ENCODE measurements at regions of chr5 and their contacts with region 1.

Region 1: GRCh38 chr5:36079200-36079761 is 12.6 kb upstream of the UGT3A2 start:
- DNase-seq: peak; percentile 47 to 62
- H3K4me3 ChIP-seq: peak overlapping the region in 1 of 4 experiments; percentile 31; a peak in 2 of 8 replicates
- H3K27ac ChIP-seq: peak overlapping the region; percentile 33; the same call in 1 of the 2 replicates
- H3K4me1 ChIP-seq: peaks cover 0 to 12% (median 2%) of the 10 kb centered on the region in 4 experiments; a peak in 5 of 7 replicates
- H3K27me3 ChIP-seq: no peaks in the 10 kb centered on the region
- CTCF ChIP-seq: peak in 2 of 3 experiments; percentile 65 to 79; a peak in 3 of 4 replicates
- EP300 ChIP-seq: no peak
- POLR2A ChIP-seq: peak in 1 of 2 experiments; percentile 61; a peak in 2 of 3 replicates
- RAD21 ChIP-seq: peak; percentile 79 to 82

Region 2: DNA sequence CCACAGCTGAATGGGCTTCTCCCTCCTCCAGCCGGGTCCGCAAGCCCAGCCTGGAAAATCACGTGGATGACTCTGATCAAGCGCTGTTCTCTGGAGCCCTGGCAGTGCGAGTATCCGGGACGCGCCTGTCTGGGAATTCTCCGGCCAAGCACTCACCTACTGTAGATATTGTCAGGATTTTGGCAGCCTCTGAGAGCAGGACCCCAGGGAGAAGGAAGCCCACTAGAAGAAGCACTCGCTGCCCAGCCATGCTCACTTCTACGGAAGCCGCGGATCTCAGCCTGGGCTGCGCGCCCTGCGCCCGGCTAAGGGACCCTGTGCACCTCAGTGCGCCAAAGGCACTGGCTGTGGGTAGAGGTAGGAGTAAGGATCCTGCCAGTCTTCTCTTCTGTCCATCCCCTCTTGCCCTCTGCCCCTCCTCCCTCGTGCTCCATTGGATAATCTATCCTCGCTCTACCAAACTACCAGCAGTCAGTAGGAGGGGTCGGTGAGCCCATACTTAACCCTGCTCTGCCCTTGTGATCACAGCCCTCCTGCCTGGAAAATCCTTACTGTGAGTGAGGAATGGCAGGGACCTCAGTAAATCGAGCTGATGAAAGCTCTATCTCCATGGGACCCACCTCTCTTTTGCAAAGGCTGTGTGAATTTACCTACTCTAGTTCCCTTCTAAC is 12.6 kb before region 1 on chr5 and contains the start of gene UGT3A2:
- CTCF ChIA-PET with region 1: interaction called, 15 read pairs
- POLR2A ChIA-PET with region 1: interaction called, 13 read pairs
- DNase-seq: peak; percentile 86
- H3K4me3 ChIP-seq: peak within 1 kb of the TSS; percentile 65 to 77 (median 76)
- H3K27ac ChIP-seq: no peak within 1 kb of the TSS
- H3K4me1 ChIP-seq: peaks cover 0 to 6% (median 4%) of the 10 kb centered on the region in 4 experiments; a peak in 4 of 7 replicates
- H3K27me3 ChIP-seq: no peaks in the 10 kb centered on the region; a peak in 1 of 7 replicates
- CTCF ChIP-seq: peak in 2 of 3 experiments; percentile 4 to 36; a peak in 2 of 4 replicates
- EP300 ChIP-seq: no peak
- POLR2A ChIP-seq: peak; percentile 92 to 99
- RAD21 ChIP-seq: no peak; a peak in 1 of 4 replicates
- total RNA-seq, gene UGT3A2: 19.4 and 20.4 TPM in 2 replicates

Region 3: GRCh38 chr5:36089989-36090564 is 10.8 kb after region 1 on chr5:
- CTCF ChIA-PET with region 1: interaction called, 55 read pairs
- POLR2A ChIA-PET with region 1: interaction called, 3 read pairs
- DNase-seq: peak; percentile 33 to 60
- H3K4me3 ChIP-seq: no peak overlapping the region
- H3K27ac ChIP-seq: no peak overlapping the region
- H3K4me1 ChIP-seq: peaks cover 0 to 5% (median 2%) of the 10 kb centered on the region in 4 experiments; a peak in 2 of 7 replicates
- H3K27me3 ChIP-seq: no peaks in the 10 kb centered on the region
- CTCF ChIP-seq: peak; percentile 28 to 75 (median 53)
- EP300 ChIP-seq: peak in 1 of 2 experiments; percentile 10; a peak in 1 of 3 replicates
- POLR2A ChIP-seq: no peak
- RAD21 ChIP-seq: peak; percentile 34 to 45

Region 4: DNA sequence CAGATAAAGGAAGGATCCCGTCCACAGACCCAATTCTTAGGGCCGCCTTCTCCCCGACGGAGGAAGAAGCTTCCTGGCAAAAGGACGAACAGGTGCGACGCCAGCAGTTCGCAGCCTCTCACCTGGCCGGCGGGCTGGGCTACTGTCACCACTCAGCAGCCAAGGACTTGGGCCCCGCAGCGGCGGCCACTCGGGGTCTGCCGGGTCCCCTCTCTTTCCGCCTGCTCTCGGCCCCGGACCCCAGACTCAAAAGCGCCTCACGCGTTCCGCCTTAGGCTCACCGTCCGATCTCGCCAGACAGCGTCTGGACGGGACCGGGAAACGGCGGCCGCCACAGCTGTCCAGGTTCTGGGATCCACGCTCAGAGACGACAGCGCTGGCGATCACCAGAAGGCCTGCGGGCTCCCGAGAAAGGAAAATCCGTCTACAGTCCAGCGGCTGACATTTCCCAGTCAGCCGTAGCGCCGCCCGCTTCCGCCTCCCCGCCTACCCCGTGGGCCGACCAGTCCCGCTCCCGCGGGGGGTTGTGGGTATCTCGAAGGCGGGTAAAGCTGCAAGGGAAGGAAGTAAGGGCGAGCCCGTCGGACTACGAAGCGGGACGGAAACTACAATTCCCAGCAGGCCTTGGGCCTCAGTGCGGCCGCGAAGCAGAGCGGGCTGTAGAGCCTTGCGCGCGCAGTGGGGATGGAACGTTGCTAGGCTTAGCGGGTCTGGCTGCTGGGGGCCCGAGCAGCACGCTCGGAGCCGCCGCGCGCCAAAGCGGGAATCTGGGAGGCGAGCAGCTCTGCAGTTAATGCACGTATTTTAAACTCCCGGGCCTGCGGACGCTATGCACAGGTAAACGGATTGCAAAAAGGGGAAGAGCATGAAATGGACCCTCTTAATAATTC is 72.4 kb after region 1 on chr5 and contains the starts of genes LMBRD2 and SKP2:
- CTCF ChIA-PET with region 1: interaction called, 44 read pairs
- POLR2A ChIA-PET with region 1: interaction called, 10 read pairs
- DNase-seq: peak; percentile 92 to 94
- H3K4me3 ChIP-seq: peak within 1 kb of the TSS; percentile 85 to 90 (median 86)
- H3K27ac ChIP-seq: peak within 1 kb of the TSS; percentile 42; the same call in 1 of the 2 replicates
- H3K4me1 ChIP-seq: peaks cover 0 to 5% (median 2%) of the 10 kb centered on the region in 4 experiments; a peak in 3 of 7 replicates
- H3K27me3 ChIP-seq: no peaks in the 10 kb centered on the region
- CTCF ChIP-seq: no peak
- EP300 ChIP-seq: no peak
- POLR2A ChIP-seq: peak; percentile 56 to 86
- RAD21 ChIP-seq: no peak
- total RNA-seq, gene LMBRD2: 3.9 and 4.1 TPM in 2 replicates
- total RNA-seq, gene SKP2: 104 TPM in 2 replicates